ENCODE measurements at regions of chr6 and their contacts with region 1.

Region 1: GRCh38 chr6:138987640-138988468 is at the start of gene REPS1:
- DNase-seq: peak; percentile 87
- ATAC-seq: peak; percentile 93
- H3K4me3 ChIP-seq: peak within 1 kb of the TSS; percentile 78 to 98 (median 94)
- H3K27ac ChIP-seq: peak within 1 kb of the TSS; percentile 82
- H3K4me1 ChIP-seq: peaks cover 60% of the 10 kb centered on the region
- H3K27me3 ChIP-seq: peaks cover 0 to 8% of the 10 kb centered on the region in 2 experiments; a peak in 2 of 5 replicates
- CTCF ChIP-seq: peak; percentile 97
- EP300 ChIP-seq: no peak; a peak in 1 of 4 replicates
- POLR2A ChIP-seq: peak; percentile 72 to 77
- RAD21 ChIP-seq: peak; percentile 92
- total RNA-seq, gene REPS1: 36.7 and 38.3 TPM in 2 replicates

Region 2: GRCh38 chr6:138773177-138774091 is 214.4 kb before region 1 on chr6 and contains the start of gene CCDC28A:
- CTCF ChIA-PET with region 1: no interaction called
- POLR2A ChIA-PET with region 1: no interaction called
- in situ Hi-C with region 1: no loop called
- intact Hi-C with region 1: loop called (anchors 1 kb)
- DNase-seq: peak; percentile 97
- ATAC-seq: peak; percentile 96
- H3K4me3 ChIP-seq: peak within 1 kb of the TSS; percentile 71 to 97 (median 81)
- H3K27ac ChIP-seq: peak within 1 kb of the TSS; percentile 93
- H3K4me1 ChIP-seq: peaks cover 30% of the 10 kb centered on the region
- H3K27me3 ChIP-seq: no peaks in the 10 kb centered on the region; a peak in 1 of 5 replicates
- CTCF ChIP-seq: peak; percentile 15; the same call in 1 of the 2 replicates
- EP300 ChIP-seq: peak in 1 of 2 experiments; percentile 4; a peak in 1 of 4 replicates
- POLR2A ChIP-seq: peak; percentile 69 to 70
- RAD21 ChIP-seq: no peak
- total RNA-seq, gene CCDC28A: 15.8 and 22.8 TPM in 2 replicates

Region 3: DNA sequence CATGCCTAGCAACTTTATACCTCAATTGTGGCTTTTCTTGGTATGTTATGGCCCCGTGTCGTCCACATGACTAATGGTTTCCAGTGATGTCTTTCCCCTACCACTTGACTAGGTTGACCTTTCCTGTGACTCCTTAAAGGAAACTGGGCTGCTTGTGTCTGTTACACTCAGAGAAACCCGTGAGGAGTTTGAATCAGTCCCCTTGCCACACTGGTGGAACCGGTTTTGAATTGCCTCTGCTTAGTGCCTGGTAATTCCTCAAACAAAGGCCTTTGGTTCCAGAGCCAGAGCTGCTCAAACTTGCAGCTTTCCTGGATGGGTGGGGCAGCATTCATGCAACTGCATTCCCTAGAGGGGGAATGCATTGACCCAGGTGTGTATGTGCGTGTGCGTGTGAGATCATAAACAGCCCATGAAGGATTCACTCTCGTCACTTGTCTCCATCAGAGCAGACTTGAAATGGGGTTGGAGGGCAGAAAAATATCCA is 170.0 kb before region 1 on chr6:
- CTCF ChIA-PET with region 1: interaction called, 16 read pairs
- POLR2A ChIA-PET with region 1: interaction called, 3 read pairs
- in situ Hi-C with region 1: loop called (anchors 5 kb)
- intact Hi-C with region 1: loop called (anchors 1 kb)
- DNase-seq: no peak
- ATAC-seq: no peak
- H3K4me3 ChIP-seq: no peak overlapping the region
- H3K27ac ChIP-seq: no peak overlapping the region
- H3K4me1 ChIP-seq: peaks cover 57% of the 10 kb centered on the region
- H3K27me3 ChIP-seq: peaks cover 0 to 13% of the 10 kb centered on the region in 2 experiments; a peak in 1 of 5 replicates
- CTCF ChIP-seq: no peak
- EP300 ChIP-seq: no peak
- POLR2A ChIP-seq: no peak
- RAD21 ChIP-seq: no peak

Region 4: GRCh38 chr6:138945354-138945753 is 42.5 kb before region 1 on chr6:
- CTCF ChIA-PET with region 1: no interaction called
- POLR2A ChIA-PET with region 1: no interaction called
- in situ Hi-C with region 1: no loop called
- intact Hi-C with region 1: loop called (anchors 5 kb)
- DNase-seq: peak; percentile 13
- ATAC-seq: peak; percentile 69
- H3K4me3 ChIP-seq: no peak overlapping the region
- H3K27ac ChIP-seq: no peak overlapping the region
- H3K4me1 ChIP-seq: peaks cover 4% of the 10 kb centered on the region; the same call in 1 of the 2 replicates
- H3K27me3 ChIP-seq: no peaks in the 10 kb centered on the region
- CTCF ChIP-seq: no peak
- EP300 ChIP-seq: no peak
- POLR2A ChIP-seq: no peak
- RAD21 ChIP-seq: no peak

Region 5: DNA sequence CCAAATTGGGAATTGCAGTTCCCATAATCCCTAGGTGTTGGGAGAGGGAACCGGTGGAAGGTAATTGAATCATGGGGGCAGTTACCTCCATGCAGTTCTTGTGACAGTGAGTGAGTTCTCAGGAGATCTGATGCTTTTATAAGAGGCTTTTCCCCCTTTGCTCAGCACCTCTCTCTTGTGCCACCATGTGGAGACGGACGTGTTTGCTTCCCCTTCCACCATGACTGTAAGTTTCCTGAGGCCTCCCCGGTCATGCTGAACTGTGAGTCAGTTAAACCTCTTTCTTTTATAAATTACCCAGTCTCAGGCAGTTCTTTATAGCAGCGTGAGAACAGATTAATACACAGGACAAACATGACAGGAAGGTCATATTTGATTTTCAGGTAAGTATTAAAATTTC is 121.7 kb after region 1 on chr6:
- CTCF ChIA-PET with region 1: no interaction called
- POLR2A ChIA-PET with region 1: no interaction called
- in situ Hi-C with region 1: no loop called
- intact Hi-C with region 1: loop called (anchors 5 kb)
- DNase-seq: peak; percentile 51
- ATAC-seq: peak; percentile 88
- H3K4me3 ChIP-seq: no peak overlapping the region
- H3K27ac ChIP-seq: no peak overlapping the region
- H3K4me1 ChIP-seq: no peaks in the 10 kb centered on the region
- H3K27me3 ChIP-seq: no peaks in the 10 kb centered on the region; a peak in 1 of 5 replicates
- CTCF ChIP-seq: peak; percentile 75
- EP300 ChIP-seq: no peak
- POLR2A ChIP-seq: no peak
- RAD21 ChIP-seq: peak; percentile 37; the same call in 1 of the 2 replicates